ENCODE measurements at regions of chrX and their contacts with region 1.

Region 1: DNA sequence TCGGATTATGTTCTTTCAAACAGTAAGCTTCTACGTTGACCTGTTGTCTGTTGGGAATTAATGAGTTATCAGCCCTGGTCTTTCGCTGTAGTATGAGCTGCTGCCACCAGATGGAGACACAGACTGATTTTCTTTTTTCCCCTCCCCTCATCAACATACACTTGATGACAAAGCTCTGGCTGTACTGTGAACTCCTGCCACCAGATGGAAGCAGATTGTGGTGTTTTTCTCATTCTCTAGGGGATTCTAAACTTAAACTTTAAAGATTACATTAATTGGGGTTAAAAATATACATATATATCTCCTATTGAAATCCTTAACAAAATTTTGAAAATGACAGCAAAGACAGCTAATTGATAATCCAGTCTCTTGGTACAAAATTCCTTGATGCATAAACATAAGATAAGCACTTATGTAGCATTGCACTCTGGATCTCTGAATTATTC is 44.8 kb downstream of the SMS start:
- DNase-seq: peak; percentile 71 to 77 (median 75)
- ATAC-seq: peak; percentile 98
- H3K4me3 ChIP-seq: no peak overlapping the region
- H3K27ac ChIP-seq: no peak overlapping the region
- H3K4me1 ChIP-seq: no peaks in the 10 kb centered on the region
- H3K27me3 ChIP-seq: no peaks in the 10 kb centered on the region
- CTCF ChIP-seq: peak; percentile 87 to 96 (median 95)
- EP300 ChIP-seq: no peak
- POLR2A ChIP-seq: no peak
- RAD21 ChIP-seq: peak; percentile 79 to 81

Region 2: GRCh38 chrX:21839334-21840192 is 145.8 kb before region 1 on chrX and contains the start of gene MBTPS2:
- CTCF ChIA-PET with region 1: interaction called, 4 read pairs
- POLR2A ChIA-PET with region 1: no interaction called
- in situ Hi-C with region 1: no loop called
- intact Hi-C with region 1: loop called (anchors 2 kb)
- DNase-seq: peak; percentile 56 to 92 (median 62)
- ATAC-seq: peak; percentile 92
- H3K4me3 ChIP-seq: peak within 1 kb of the TSS; percentile 81
- H3K27ac ChIP-seq: peak within 1 kb of the TSS; percentile 70
- H3K4me1 ChIP-seq: no peaks in the 10 kb centered on the region
- H3K27me3 ChIP-seq: no peaks in the 10 kb centered on the region
- CTCF ChIP-seq: peak; percentile 49 to 61 (median 53)
- EP300 ChIP-seq: 0 out of 2 replicates have a peak, but pooled peaks have one; percentile 29
- POLR2A ChIP-seq: peak; percentile 85
- RAD21 ChIP-seq: peak; percentile 53 to 71
- polyA plus RNA-seq, gene MBTPS2: 3.9 to 4.0 TPM

Region 3: DNA sequence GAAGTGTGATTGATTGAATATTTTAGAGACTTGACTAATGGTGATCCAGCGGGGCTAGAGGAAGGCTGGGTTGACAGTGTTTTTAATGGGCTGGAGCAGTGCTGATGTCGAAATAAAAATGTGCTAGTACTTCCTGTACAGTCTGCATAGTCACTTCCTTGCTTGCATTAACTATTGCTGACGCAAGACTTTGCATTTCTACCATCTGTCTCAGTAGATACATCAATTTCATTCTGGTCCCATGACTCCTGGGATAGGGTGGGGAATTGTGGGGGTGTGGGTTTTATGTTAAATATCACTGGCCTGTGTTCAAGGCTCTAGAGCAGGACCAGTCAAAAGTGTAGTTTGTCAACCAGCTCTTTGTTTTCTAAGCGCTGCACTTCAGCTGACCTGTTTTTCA is 11.5 kb after region 1 on chrX:
- CTCF ChIA-PET with region 1: no interaction called
- POLR2A ChIA-PET with region 1: no interaction called
- in situ Hi-C with region 1: no loop called
- intact Hi-C with region 1: no loop called
- DNase-seq: peak in 1 of 4 experiments; percentile 13
- ATAC-seq: peak; percentile 81
- H3K4me3 ChIP-seq: no peak overlapping the region
- H3K27ac ChIP-seq: no peak overlapping the region
- H3K4me1 ChIP-seq: peaks cover 4 to 6% of the 10 kb centered on the region in 2 experiments; a peak in 3 of 5 replicates
- H3K27me3 ChIP-seq: no peaks in the 10 kb centered on the region
- CTCF ChIP-seq: no peak
- EP300 ChIP-seq: no peak
- POLR2A ChIP-seq: no peak
- RAD21 ChIP-seq: no peak

Region 4: DNA sequence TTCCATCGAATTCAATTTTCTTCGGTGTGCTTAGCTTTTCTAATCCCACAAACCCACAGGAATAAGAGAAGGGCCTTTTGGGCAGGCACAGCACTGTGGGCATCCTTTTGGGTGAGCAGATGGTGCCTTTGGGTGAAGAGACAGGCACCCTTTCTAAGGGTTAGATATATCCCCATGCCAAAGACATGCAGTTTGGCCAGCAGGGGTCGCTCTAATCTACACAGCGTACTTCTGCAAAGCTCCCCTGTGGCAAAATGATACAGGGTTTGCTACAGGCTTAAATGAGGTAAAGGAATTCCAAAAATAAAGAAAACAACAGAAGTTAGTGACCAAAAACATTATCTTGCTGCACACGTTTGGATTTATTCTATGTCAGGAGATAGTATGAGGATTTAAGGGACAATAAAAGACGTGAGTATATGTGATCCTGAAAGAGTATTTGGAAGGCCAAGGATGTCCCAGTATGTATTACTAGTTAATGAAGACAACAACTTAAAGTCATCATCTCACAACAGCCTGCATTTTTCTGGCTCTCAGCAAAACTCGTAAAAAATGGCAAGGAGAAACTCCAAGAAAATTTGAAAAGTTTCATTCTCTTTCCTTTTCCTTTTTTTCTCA is 96.2 kb after region 1 on chrX:
- CTCF ChIA-PET with region 1: no interaction called
- POLR2A ChIA-PET with region 1: no interaction called
- in situ Hi-C with region 1: no loop called
- intact Hi-C with region 1: loop called (anchors 10 kb)
- DNase-seq: peak; percentile 39 to 62 (median 44)
- ATAC-seq: peak; percentile 92
- H3K4me3 ChIP-seq: no peak overlapping the region
- H3K27ac ChIP-seq: no peak overlapping the region
- H3K4me1 ChIP-seq: no peaks in the 10 kb centered on the region
- H3K27me3 ChIP-seq: no peaks in the 10 kb centered on the region
- CTCF ChIP-seq: peak; percentile 55 to 67 (median 62)
- EP300 ChIP-seq: no peak
- POLR2A ChIP-seq: no peak
- RAD21 ChIP-seq: peak; percentile 9 to 54; a peak in 2 of 4 replicates

Region 5: DNA sequence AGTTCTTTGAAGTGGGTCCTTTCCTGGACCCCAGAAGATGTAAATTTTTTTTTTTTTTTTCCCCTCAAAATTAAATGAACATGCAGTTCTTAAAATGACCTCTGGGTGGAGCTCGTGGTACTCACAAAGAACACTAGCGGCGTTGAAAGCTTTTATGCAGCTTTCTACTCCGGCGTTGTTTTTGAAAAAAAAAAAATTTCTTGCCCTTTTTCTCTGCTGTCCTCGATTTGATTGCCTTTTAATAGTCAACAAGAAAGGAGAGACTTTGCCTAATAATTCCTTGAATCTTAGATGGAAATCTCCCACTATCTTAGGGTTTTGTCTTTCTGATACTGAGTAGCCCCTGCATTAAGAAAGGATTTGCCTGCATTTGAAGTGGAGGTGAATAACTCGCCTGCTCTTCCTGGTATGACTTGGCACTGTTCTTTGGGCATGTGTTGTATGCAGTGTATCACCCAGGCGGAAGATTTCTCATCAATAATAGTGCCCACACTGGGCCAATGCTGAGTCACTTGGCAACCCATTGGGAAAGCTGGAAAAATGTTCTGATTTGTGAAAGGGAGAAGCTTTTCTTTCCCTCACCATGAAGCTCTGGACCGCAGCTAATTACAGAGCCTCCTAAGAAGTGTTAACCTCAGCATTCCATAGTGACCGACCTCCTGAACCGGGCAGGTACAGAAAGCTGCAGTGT is 150.8 kb after region 1 on chrX:
- CTCF ChIA-PET with region 1: no interaction called
- POLR2A ChIA-PET with region 1: no interaction called
- in situ Hi-C with region 1: no loop called
- intact Hi-C with region 1: loop called (anchors 5 kb)
- DNase-seq: peak; percentile 27 to 49 (median 39)
- ATAC-seq: no peak
- H3K4me3 ChIP-seq: no peak overlapping the region
- H3K27ac ChIP-seq: no peak overlapping the region
- H3K4me1 ChIP-seq: no peaks in the 10 kb centered on the region
- H3K27me3 ChIP-seq: no peaks in the 10 kb centered on the region
- CTCF ChIP-seq: peak; percentile 35 to 73 (median 38); a peak in 4 of 6 replicates
- EP300 ChIP-seq: no peak
- POLR2A ChIP-seq: no peak
- RAD21 ChIP-seq: peak; percentile 51 to 57

Region 6: DNA sequence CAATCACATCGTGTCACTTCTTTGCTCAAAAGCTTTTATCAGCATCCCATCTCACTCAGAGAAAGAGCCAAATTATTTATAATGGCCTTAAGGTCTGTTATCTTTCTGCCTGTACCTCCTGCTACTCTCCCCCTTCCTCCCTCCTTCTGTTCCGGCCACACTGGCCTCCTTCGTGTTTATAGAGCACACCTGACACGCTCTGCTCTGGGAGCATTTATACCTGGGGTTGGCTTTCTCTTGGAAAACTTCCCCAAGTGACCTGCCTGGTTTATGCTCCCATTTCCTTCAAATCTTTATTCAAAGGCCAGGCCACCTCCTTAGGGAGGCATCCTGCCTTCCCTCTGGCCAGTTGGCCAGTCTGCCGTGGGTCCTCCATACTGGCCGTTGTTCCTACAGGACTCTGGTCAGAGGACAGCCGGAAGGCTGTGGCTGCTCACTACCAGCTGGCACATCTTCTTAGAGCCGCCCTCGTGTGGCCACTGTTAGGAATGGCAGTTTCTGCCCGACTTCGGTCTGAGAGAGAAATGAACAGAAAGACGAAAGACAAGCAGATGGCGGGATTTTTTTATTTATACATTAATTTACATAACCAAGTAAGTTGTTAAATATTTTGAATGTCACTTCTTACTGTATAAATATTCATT is 207.2 kb after region 1 on chrX:
- CTCF ChIA-PET with region 1: no interaction called
- POLR2A ChIA-PET with region 1: interaction called, 3 read pairs
- in situ Hi-C with region 1: no loop called
- intact Hi-C with region 1: loop called (anchors 1 kb)
- DNase-seq: peak; percentile 32 to 63 (median 50)
- ATAC-seq: peak; percentile 90
- H3K4me3 ChIP-seq: no peak overlapping the region
- H3K27ac ChIP-seq: no peak overlapping the region
- H3K4me1 ChIP-seq: no peaks in the 10 kb centered on the region
- H3K27me3 ChIP-seq: no peaks in the 10 kb centered on the region
- CTCF ChIP-seq: peak; percentile 57 to 72 (median 63); a peak in 5 of 6 replicates
- EP300 ChIP-seq: no peak
- POLR2A ChIP-seq: no peak
- RAD21 ChIP-seq: peak; percentile 45 to 54

Region 7: DNA sequence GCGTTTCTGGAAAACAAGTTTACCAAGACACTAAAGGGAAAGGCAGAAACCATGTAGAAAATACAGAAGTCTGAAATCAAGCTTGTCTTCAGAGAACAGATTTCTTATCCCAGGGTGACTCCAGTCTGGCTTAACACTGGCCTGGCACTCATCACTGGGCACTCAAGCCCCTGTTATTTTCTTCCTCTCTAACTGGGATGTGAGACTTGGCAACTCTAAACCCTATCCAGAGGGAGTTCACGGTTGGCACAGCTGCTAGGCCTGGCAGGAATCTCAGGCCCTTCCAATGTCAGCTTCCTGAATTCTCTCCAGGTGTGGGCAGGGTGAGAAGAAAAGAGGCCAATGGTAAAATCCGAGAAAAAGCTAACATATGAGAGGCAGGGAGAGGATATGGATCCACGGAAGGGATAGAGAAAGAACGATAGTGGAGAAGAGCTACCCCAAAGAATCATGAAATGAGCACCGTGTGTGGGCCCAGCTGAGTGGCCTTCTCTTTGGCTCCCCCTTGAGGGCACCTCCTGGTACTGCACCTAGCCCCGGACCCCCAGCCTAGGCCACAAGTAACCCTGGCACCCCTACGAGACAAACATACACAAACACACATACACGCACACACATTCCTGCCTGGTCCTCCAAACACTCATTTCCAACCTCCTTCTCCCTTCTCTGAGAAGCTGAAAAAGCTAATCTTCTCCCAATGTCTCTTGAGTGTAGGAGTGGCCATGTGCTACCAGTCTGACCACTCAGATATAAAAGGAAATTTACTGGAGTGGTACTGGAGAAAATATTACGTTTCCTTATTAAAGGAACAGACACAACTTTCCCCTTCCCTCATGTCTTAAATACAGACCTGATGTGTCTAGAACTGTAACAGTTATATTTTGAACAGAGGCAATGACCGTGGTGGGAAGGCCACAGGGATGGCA is 1332.7 kb after region 1 on chrX:
- CTCF ChIA-PET with region 1: no interaction called
- POLR2A ChIA-PET with region 1: no interaction called
- in situ Hi-C with region 1: no loop called
- intact Hi-C with region 1: loop called (anchors 10 kb)
- DNase-seq: peak; percentile 41 to 71 (median 68)
- ATAC-seq: peak; percentile 93
- H3K4me3 ChIP-seq: no peak overlapping the region
- H3K27ac ChIP-seq: no peak overlapping the region
- H3K4me1 ChIP-seq: no peaks in the 10 kb centered on the region
- H3K27me3 ChIP-seq: no peaks in the 10 kb centered on the region
- CTCF ChIP-seq: peak; percentile 61 to 82 (median 64)
- EP300 ChIP-seq: no peak
- POLR2A ChIP-seq: no peak
- RAD21 ChIP-seq: peak in 1 of 2 experiments; percentile 56; a peak in 3 of 4 replicates